AG04449 (cell line): ENCODE measurements at regions of chr9 and their contacts with region 1.

Region 1: GRCh38 chr9:35611230-35611797 is 6.3 kb downstream of the TESK1 start:
- DNase-seq: no peak
- H3K4me3 ChIP-seq: no peak overlapping the region
- CTCF ChIP-seq: peak; percentile 73

Region 2: GRCh38 chr9:35575478-35575877 is 35.8 kb before region 1 on chr9:
- CTCF ChIA-PET with region 1: no interaction called
- POLR2A ChIA-PET with region 1: no interaction called
- DNase-seq: no peak
- H3K4me3 ChIP-seq: no peak overlapping the region
- CTCF ChIP-seq: no peak

Region 3: DNA sequence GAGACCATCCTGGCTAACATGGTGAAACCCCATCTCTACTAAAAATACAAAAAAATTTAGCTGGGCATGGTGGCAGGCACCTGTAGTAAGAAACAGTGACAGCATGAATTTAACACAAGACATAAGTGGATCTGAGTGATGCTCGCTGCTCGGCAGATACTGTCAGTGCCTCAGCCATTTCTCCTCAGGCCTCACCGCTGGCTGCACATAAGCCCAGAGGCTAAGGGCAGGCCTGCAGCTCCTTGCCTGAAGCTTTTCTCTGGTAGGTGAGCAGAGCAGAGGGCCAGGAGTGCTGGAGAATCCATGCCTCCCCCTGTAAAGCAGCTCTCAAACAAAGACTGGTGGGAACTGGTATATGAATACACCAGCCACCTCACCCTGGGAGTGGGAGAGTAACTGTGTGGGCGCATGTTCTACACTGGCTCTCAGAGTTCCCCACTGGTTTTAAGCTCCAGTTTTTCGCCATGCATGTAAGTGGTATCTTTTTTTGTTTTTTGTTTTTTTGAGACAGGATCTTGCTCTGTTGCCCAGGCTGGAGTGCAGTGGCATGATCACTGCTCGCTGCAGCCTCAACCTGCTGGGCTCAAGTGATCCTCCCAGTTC is 17.2 kb after region 1 on chr9:
- CTCF ChIA-PET with region 1: interaction called, 12 read pairs
- POLR2A ChIA-PET with region 1: no interaction called
- DNase-seq: no peak
- H3K4me3 ChIP-seq: no peak overlapping the region
- CTCF ChIP-seq: no peak

Region 4: DNA sequence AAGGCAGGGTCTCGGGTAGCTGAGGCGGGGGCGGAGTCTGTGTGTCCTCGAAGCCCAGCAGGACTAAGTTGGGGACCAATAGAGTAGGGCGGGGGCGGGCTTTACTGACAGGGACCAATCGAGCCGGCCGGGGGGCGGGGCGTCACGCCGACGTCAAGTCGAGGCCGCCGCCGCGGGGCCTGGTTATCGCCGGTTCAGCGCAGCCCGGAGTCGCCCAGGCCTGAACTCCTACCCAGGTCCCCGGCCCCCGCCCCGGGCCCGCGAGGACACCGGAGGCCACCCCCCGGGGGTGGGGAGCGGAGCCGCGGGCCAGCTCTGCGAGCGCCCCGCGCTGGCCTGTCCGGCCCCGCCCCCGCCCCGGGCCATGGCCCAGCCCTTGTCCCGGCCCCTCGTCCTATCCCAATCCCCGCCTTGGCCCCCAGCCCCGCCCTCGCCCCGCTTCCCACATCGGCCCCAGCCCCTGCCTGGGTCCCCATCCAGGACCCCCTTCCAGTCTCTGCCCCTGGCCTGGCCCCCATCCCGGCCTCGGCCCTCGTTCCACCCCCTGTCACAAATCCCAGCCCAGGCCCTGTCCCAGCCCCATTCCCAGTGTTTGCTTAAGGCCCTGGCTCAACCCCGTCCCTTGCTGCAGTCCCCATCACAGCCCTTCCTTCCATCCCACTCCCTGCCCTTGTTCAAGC is 217.9 kb after region 1 on chr9 and contains the start of gene TMEM8B:
- CTCF ChIA-PET with region 1: no interaction called
- POLR2A ChIA-PET with region 1: no interaction called
- DNase-seq: no peak
- H3K4me3 ChIP-seq: peak within 1 kb of the TSS; percentile 69
- CTCF ChIP-seq: no peak

Region 5: DNA sequence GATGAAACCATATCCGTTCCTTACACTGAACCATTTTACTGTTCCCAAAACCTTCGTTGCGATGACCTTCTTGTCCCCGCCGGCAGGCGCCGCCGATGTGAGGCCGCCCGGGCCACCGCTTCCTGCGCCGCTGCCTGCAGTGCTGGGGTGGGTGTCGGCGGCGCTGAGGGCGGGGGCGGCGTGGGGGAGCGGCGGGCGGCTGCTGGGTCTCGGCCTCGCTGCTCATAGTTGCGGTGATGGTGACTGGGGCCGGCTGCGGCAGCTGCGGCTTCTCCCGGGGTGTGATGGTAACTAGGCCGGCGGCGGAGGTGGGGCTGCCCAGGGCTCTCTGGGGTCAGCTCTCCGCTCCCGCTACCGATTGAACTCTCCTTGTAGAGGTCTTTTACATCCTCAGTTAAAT is 360.8 kb after region 1 on chr9:
- CTCF ChIA-PET with region 1: no interaction called
- POLR2A ChIA-PET with region 1: no interaction called
- DNase-seq: no peak
- H3K4me3 ChIP-seq: no peak overlapping the region
- CTCF ChIP-seq: no peak